ENCODE measurements at regions of chr9 and their contacts with region 1.

Region 1: GRCh38 chr9:33167046-33167808 is at the start of gene B4GALT1:
- DNase-seq: peak; percentile 97 to 99
- ATAC-seq: peak; percentile 88
- H3K4me3 ChIP-seq: peak within 1 kb of the TSS; percentile 92
- H3K27ac ChIP-seq: peak within 1 kb of the TSS; percentile 32 to 95
- H3K4me1 ChIP-seq: peaks cover 0 to 17% of the 10 kb centered on the region in 2 donors
- H3K27me3 ChIP-seq: no peaks in the 10 kb centered on the region
- total RNA-seq, gene B4GALT1: 74.5 to 95.6 TPM

Region 2: DNA sequence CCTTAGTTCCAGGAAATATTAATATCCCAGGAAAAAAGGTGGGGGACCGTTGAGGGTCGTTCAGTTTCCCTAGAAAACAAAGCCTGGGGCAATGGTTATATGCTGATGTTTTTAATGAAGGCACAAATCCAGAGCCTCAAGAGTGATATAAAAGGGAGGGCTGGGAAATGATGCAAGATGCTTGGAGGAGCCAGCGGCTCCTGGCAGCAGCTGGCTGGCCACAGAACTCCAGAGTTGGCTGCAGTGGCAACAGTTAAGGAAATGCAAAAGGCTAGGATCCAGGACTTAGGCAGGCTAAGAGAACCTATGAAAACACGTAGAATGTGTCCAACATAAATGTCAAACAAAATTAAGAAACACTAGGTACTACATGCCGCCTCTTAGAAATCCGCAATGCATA is 30.9 kb after region 1 on chr9:
- intact Hi-C with region 1: loop called in 1 of 2 experiments (anchors 1 kb)
- DNase-seq: peak; percentile 79 to 84
- ATAC-seq: peak; percentile 89
- H3K4me3 ChIP-seq: peak overlapping the region in 1 of 2 donors; percentile 44
- H3K27ac ChIP-seq: peak overlapping the region; percentile 52 to 79
- H3K4me1 ChIP-seq: peaks cover 0 to 3% of the 10 kb centered on the region in 2 donors
- H3K27me3 ChIP-seq: no peaks in the 10 kb centered on the region

Region 3: GRCh38 chr9:33225319-33226149 is 58.3 kb after region 1 on chr9:
- intact Hi-C with region 1: loop called in 1 of 2 experiments (anchors 2 kb)
- DNase-seq: no peak
- ATAC-seq: peak; percentile 72
- H3K4me3 ChIP-seq: no peak overlapping the region
- H3K27ac ChIP-seq: no peak overlapping the region
- H3K4me1 ChIP-seq: no peaks in the 10 kb centered on the region
- H3K27me3 ChIP-seq: no peaks in the 10 kb centered on the region

Measured in aorta (tissue), 5 donors.